ENCODE measurements at regions of chr12 and their contacts with region 1.

Region 1: GRCh38 chr12:76784600-76785051 is 20.7 kb downstream of the ZDHHC17 start:
- DNase-seq: no peak
- H3K4me3 ChIP-seq: no peak overlapping the region
- H3K4me3 Mint-ChIP-seq: no peak overlapping the region
- H3K27ac ChIP-seq: no peak overlapping the region
- H3K27ac Mint-ChIP-seq: no peak overlapping the region
- H3K4me1 ChIP-seq: no peaks in the 10 kb centered on the region
- H3K4me1 Mint-ChIP-seq: peaks cover 3% of the 10 kb centered on the region
- H3K27me3 ChIP-seq: no peaks in the 10 kb centered on the region
- H3K27me3 Mint-ChIP-seq: no peaks in the 10 kb centered on the region
- CTCF ChIP-seq: no peak

Region 2: DNA sequence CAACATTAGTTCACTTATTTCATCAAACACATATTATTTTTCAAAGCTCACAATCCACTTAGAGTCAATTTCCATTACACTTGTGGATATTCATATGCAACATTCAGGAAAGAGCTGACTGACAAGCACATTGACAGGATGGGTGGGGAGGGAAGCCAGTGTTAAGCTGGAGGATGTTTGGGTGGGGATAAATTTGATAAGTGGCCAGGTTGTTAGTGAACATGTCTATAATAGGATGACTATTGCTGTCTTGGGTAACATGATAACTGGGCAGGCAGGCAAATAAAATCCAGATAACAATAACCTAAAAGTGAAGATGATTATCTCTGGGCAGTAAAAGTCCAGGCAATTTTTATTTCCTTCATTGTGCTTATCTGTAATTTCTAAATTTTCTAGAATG is 151.2 kb before region 1 on chr12:
- intact Hi-C with region 1: loop called in 1 of 2 experiments (anchors 5 kb)
- DNase-seq: no peak
- H3K4me3 ChIP-seq: no peak overlapping the region
- H3K4me3 Mint-ChIP-seq: no peak overlapping the region
- H3K27ac ChIP-seq: no peak overlapping the region
- H3K27ac Mint-ChIP-seq: no peak overlapping the region
- H3K4me1 ChIP-seq: no peaks in the 10 kb centered on the region
- H3K4me1 Mint-ChIP-seq: no peaks in the 10 kb centered on the region
- H3K27me3 ChIP-seq: no peaks in the 10 kb centered on the region
- H3K27me3 Mint-ChIP-seq: peaks cover 0 to 5% (median 0%) of the 10 kb centered on the region in 3 donors
- CTCF ChIP-seq: no peak

Measured in CD14-positive monocyte (primary cell).